Caco-2 (cell line): ENCODE measurements at regions of chr7 and their contacts with region 1.

Region 1: GRCh38 chr7:77247206-77247850 is 47.7 kb upstream of the FGL2 start:
- DNase-seq: peak; percentile 80 to 88
- H3K4me3 ChIP-seq: no peak overlapping the region
- H3K4me3 Mint-ChIP-seq: no peak overlapping the region
- H3K27ac Mint-ChIP-seq: no peak overlapping the region
- H3K4me1 ChIP-seq: peaks cover 16% of the 10 kb centered on the region; the same call in 1 of the 2 replicates
- H3K4me1 Mint-ChIP-seq: peaks cover 5% of the 10 kb centered on the region
- H3K27me3 ChIP-seq: no peaks in the 10 kb centered on the region
- H3K27me3 Mint-ChIP-seq: peaks cover 7% of the 10 kb centered on the region
- CTCF ChIP-seq: peak; percentile 85 to 86

Region 2: DNA sequence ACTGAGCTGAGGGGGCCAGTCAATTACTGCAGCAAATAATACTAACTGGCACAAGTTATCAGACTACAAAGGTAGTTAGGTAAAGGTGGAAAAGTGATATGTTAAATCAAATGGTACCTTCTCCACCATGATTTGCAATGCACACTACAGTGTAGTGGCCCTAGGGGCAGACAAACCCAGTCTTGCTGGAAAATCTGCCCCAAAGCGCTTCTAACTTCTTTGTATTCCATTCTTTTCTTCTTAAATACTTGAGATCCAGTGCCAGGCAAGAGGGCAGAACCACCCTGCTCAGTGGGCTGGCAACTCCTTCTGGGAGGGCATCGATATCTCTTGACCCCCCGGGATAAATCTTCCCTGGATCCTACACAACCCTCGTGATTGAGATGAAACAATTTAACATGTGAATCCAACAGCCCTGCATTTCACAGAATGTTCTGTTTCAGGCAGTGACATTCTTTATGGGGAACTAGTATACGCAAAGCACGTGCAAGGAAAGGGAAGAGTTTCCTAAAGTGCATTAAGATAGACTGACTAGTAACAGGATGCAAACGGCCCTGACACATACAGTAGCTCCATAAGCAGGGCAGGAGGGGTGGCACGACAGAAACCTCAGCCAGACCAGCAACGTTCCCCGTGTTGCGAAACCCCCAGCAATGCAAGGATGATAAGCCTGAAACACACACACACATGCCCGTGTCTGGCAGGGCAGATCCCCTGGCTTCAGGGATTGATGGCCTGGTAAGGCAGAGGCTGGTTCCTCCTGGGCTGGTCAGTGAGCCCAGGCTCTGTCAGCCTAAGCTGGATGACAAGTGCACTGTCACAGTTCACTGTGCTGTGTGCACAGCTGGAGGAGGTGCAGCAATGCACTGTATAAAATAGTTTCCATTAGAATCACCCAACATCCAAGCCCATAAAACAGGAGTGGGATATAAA is 79.6 kb after region 1 on chr7:
- CTCF ChIA-PET with region 1: interaction called, 39 read pairs
- POLR2A ChIA-PET with region 1: no interaction called
- intact Hi-C with region 1: loop called (anchors 1 kb)
- DNase-seq: peak; percentile 88 to 89
- H3K4me3 ChIP-seq: no peak overlapping the region
- H3K4me3 Mint-ChIP-seq: no peak overlapping the region
- H3K27ac Mint-ChIP-seq: peak overlapping the region; percentile 66
- H3K4me1 ChIP-seq: peaks cover 20% of the 10 kb centered on the region
- H3K4me1 Mint-ChIP-seq: peaks cover 16% of the 10 kb centered on the region
- H3K27me3 ChIP-seq: no peaks in the 10 kb centered on the region
- H3K27me3 Mint-ChIP-seq: no peaks in the 10 kb centered on the region
- CTCF ChIP-seq: no peak

Region 3: DNA sequence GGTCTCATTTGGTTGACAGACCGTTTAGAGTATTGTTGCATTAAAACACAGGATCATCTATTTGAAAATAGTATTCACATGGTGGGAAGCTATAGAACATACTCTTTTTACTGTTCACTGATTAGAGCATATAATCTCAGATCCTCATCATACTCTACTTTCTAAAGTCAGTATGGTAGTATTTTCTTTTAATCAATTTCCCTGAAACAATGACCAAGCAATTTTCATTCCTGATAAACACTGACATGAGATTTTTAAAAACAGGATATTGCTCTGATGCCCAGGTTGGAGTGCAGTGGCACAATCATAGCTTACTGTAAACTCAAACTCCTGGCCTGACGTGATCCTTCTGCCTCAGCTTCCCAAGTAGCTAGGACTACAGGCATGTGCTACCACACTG is 353.6 kb after region 1 on chr7:
- CTCF ChIA-PET with region 1: no interaction called
- POLR2A ChIA-PET with region 1: no interaction called
- intact Hi-C with region 1: no loop called
- DNase-seq: no peak
- H3K4me3 ChIP-seq: no peak overlapping the region
- H3K4me3 Mint-ChIP-seq: no peak overlapping the region
- H3K27ac Mint-ChIP-seq: no peak overlapping the region
- H3K4me1 ChIP-seq: no peaks in the 10 kb centered on the region
- H3K4me1 Mint-ChIP-seq: no peaks in the 10 kb centered on the region
- H3K27me3 ChIP-seq: no peaks in the 10 kb centered on the region
- H3K27me3 Mint-ChIP-seq: no peaks in the 10 kb centered on the region
- CTCF ChIP-seq: no peak